ENCODE measurements at regions of chr2 and their contacts with region 1.

Region 1: GRCh38 chr2:135913727-135914365 is 37.6 kb upstream of the MCM6 start:
- DNase-seq: no peak
- ATAC-seq: no peak

Region 2: DNA sequence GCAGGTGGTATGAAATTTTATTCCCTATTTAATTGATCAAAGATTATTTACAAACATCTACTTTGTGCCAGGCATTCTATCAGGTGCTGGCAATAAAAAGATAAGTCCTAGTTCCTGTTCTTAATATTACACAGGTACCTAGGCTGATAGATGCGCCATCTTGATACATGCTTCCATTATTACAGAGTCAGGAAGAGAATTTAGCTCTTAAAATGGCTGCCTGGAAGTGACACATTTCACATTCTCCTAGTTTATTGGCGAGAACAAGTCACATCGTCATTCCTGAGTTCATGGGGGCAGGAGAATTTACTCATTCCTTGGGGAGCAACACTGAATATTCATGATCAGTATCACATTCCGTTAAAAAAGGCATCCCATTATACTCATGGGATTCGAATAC is 72.7 kb after region 1 on chr2:
- intact Hi-C with region 1: no loop called
- DNase-seq: no peak
- ATAC-seq: no peak

Region 3: DNA sequence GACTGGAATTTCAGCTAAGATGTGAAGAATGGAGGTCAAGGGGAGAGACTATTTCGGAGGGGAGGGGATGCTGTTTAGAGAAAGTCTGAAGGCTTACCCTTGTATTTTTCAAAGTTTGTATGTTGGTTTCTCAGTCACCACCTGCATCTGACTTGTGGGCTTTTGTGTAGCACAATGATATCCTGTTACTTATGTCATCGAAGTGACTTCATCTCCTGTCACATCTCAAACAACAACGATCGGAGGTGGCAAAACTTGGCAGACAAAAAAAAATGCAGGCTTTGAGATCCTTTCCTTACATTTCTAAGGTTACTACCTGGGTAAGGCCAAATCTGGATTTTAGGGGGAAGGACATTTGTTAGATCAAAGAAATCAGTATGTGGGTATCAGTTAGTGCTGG is 215.8 kb after region 1 on chr2:
- intact Hi-C with region 1: loop called in 1 of 2 experiments (anchors 10 kb)
- DNase-seq: no peak
- ATAC-seq: peak in 1 of 2 donors; percentile 29

Region 4: GRCh38 chr2:136378712-136379595 is 465.1 kb after region 1 on chr2:
- intact Hi-C with region 1: loop called (anchors 1 to 5 kb)
- DNase-seq: peak; percentile 45
- ATAC-seq: peak; percentile 43 to 68

Region 5: DNA sequence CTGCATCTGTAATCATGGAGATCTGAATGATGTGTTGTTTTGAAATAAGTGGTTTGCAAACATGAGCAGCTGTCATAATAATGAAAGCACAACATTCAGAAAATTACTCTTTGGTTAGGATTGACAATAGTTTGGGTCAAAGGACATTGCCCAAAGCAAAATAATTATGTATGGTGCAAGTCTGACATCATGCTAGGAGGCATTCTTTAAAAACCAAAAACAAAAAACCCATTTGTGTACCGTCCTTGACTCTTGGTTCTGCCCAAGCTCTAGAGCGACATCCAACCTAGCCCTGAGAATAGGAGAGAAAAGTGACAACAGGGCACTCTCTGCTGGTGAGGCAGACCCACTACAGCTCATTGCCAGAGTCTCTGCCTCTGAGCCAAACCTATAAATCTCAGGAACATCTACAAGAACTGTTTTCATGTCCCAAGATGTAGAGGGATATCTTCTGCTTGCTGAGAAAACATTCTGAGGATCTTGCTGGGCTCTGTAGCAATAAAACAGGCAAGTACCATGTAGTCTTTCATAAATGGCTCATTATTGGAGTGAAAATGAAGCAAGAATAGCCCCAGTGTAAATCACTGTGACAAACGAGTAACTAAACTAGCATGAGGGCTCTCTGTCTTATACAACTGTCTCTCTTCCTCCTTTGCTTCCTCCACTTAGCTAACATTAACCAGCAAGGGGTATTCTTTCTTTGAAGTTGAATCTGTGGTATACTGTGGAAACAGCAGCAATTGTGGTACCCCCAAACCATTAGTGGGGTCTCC is 470.9 kb after region 1 on chr2:
- intact Hi-C with region 1: loop called (anchors 1 to 5 kb)
- DNase-seq: no peak
- ATAC-seq: peak; percentile 78 to 85